ENCODE measurements at regions of chr6 and their contacts with region 1.

Region 1: GRCh38 chr6:73520688-73521350 is at the start of gene EEF1A1:
- DNase-seq: peak; percentile 99
- H3K4me3 Mint-ChIP-seq: peak within 1 kb of the TSS; percentile 97
- H3K27ac Mint-ChIP-seq: peak within 1 kb of the TSS; percentile 100
- H3K4me1 Mint-ChIP-seq: peaks cover 45% of the 10 kb centered on the region
- H3K27me3 Mint-ChIP-seq: peaks cover 10% of the 10 kb centered on the region
- total RNA-seq, gene EEF1A1: 9,514 and 9,634 TPM in 2 replicates

Region 2: GRCh38 chr6:73388800-73389512 is 131.9 kb before region 1 on chr6:
- intact Hi-C with region 1: no loop called
- DNase-seq: peak; percentile 89
- H3K4me3 Mint-ChIP-seq: peak overlapping the region; percentile 87
- H3K27ac Mint-ChIP-seq: peak overlapping the region; percentile 81
- H3K4me1 Mint-ChIP-seq: peaks cover 26% of the 10 kb centered on the region
- H3K27me3 Mint-ChIP-seq: peaks cover 1% of the 10 kb centered on the region

Region 3: GRCh38 chr6:73451223-73452107 is 69.4 kb before region 1 on chr6:
- intact Hi-C with region 1: loop called (anchors 1 kb)
- DNase-seq: peak; percentile 83
- H3K4me3 Mint-ChIP-seq: peak overlapping the region; percentile 90
- H3K27ac Mint-ChIP-seq: peak overlapping the region; percentile 89
- H3K4me1 Mint-ChIP-seq: peaks cover 22% of the 10 kb centered on the region
- H3K27me3 Mint-ChIP-seq: no peaks in the 10 kb centered on the region

Region 4: DNA sequence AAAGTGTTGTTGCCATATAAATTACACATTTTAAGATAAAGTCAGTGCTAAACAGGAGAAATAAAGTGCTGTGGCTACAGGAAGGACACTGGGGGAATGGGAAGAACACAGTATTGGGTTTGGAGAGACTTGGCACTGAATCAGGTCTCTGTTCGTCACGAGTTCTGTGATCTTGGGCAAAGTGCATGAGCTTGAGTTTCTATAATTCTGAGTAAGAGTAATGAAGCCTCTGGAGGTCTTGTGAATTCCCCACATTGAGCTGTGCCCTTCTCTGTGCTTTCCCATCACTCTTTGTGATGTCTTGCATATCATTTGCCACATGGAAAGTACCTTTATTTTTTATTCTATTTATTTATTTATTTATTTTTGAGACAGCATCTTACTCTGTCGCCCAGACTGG is 16.9 kb after region 1 on chr6:
- intact Hi-C with region 1: no loop called
- DNase-seq: no peak
- H3K4me3 Mint-ChIP-seq: no peak overlapping the region
- H3K27ac Mint-ChIP-seq: no peak overlapping the region
- H3K4me1 Mint-ChIP-seq: no peaks in the 10 kb centered on the region
- H3K27me3 Mint-ChIP-seq: peaks cover 5% of the 10 kb centered on the region

Region 5: GRCh38 chr6:73580247-73581149 is 59.7 kb after region 1 on chr6:
- intact Hi-C with region 1: loop called (anchors 1 kb)
- DNase-seq: peak; percentile 87
- H3K4me3 Mint-ChIP-seq: peak overlapping the region; percentile 71
- H3K27ac Mint-ChIP-seq: peak overlapping the region; percentile 99
- H3K4me1 Mint-ChIP-seq: peaks cover 19% of the 10 kb centered on the region
- H3K27me3 Mint-ChIP-seq: no peaks in the 10 kb centered on the region

Region 6: DNA sequence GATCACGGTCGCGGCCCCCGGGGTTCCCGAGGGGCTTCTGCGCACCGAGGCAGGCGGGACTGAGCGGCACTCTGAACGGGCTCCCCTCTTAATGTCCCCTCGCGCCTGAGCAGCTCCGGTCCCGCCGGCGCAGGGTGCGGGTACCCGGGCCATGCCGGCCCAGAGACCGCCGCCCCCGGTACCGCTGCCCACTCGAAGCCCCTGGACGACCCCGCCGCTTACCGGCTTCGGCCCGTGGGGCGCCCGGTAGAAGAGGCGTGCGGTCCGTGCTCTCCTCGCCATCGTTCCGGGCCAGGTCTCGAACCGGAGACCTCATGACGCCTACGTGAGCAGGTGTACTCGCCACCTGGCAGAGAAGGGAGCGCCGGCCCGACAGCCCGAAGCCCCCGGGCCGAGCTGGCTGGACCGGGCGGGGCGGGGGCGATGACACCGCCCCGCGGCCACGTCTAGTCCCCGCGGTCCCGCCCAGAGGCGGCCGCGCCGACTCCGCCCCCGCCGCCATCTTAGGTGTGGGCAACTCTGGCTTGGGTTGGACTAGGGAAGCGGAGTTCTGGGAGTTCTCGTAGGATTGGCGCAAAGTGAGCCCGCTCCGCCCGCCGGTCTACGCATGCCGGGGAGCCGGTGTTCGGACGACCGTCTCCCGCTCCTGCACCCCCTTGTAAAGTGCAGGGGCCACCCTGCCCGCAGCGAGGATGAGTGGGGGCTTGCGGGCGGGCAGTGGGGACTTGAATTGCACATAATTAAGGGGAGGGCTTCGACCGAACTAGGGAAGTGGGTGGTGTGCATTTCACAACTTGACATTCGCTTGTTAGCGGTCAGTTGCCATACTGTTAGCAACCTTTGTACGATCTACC is 133.0 kb after region 1 on chr6 and contains the start of gene SLC17A5:
- intact Hi-C with region 1: loop called (anchors 1 kb)
- DNase-seq: peak; percentile 96
- H3K4me3 Mint-ChIP-seq: peak within 1 kb of the TSS; percentile 96
- H3K27ac Mint-ChIP-seq: peak within 1 kb of the TSS; percentile 97
- H3K4me1 Mint-ChIP-seq: peaks cover 25% of the 10 kb centered on the region
- H3K27me3 Mint-ChIP-seq: no peaks in the 10 kb centered on the region
- total RNA-seq, gene SLC17A5: 4.9 TPM in 2 replicates

Region 7: GRCh38 chr6:73732845-73733675 is 212.2 kb after region 1 on chr6:
- intact Hi-C with region 1: loop called (anchors 5 kb)
- DNase-seq: peak; percentile 93
- H3K4me3 Mint-ChIP-seq: no peak overlapping the region
- H3K27ac Mint-ChIP-seq: no peak overlapping the region
- H3K4me1 Mint-ChIP-seq: peaks cover 31% of the 10 kb centered on the region
- H3K27me3 Mint-ChIP-seq: no peaks in the 10 kb centered on the region

Region 8: GRCh38 chr6:75284632-75285286 is 1763.9 kb after region 1 on chr6 and contains the start of gene TMEM30A:
- intact Hi-C with region 1: loop called (anchors 2 kb)
- DNase-seq: peak; percentile 99
- H3K4me3 Mint-ChIP-seq: no peak within 1 kb of the TSS
- H3K27ac Mint-ChIP-seq: no peak within 1 kb of the TSS
- H3K4me1 Mint-ChIP-seq: peaks cover 29% of the 10 kb centered on the region
- H3K27me3 Mint-ChIP-seq: no peaks in the 10 kb centered on the region
- total RNA-seq, gene TMEM30A: 57.0 and 60.5 TPM in 2 replicates